ENCODE measurements at regions of chr18 and their contacts with region 1.

Region 1: GRCh38 chr18:11316546-11316945 is 167.2 kb upstream of the PIEZO2 start:
- DNase-seq: no peak
- H3K4me3 ChIP-seq: no peak overlapping the region
- H3K4me3 Mint-ChIP-seq: no peak overlapping the region
- H3K27ac Mint-ChIP-seq: no peak overlapping the region
- H3K4me1 ChIP-seq: peaks cover 10% of the 10 kb centered on the region; the same call in 1 of the 2 replicates
- H3K4me1 Mint-ChIP-seq: peaks cover 8% of the 10 kb centered on the region
- H3K27me3 ChIP-seq: no peaks in the 10 kb centered on the region
- H3K27me3 Mint-ChIP-seq: no peaks in the 10 kb centered on the region
- CTCF ChIP-seq: no peak

Region 2: DNA sequence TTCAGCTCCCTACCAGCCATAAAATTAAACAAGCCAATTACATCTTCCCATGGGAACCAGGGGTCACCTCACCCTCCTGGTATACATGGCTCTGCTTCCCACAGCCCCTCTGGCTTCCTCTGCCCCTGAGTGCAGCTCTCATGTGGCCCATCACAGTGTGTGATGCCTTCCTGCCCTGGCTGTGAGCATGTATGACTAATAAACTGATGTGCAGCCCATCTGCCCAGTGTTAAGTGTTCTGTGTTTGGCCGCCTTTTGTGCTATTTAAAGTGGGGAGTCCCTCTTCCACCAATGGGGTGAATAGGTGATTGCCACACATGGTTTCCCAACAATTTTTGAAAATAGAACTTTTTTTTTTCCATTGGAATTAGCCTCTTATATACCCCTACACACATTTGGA is 79.5 kb before region 1 on chr18:
- CTCF ChIA-PET with region 1: no interaction called
- POLR2A ChIA-PET with region 1: no interaction called
- intact Hi-C with region 1: loop called (anchors 2 kb)
- DNase-seq: no peak
- H3K4me3 ChIP-seq: no peak overlapping the region
- H3K4me3 Mint-ChIP-seq: no peak overlapping the region
- H3K27ac Mint-ChIP-seq: no peak overlapping the region
- H3K4me1 ChIP-seq: no peaks in the 10 kb centered on the region
- H3K4me1 Mint-ChIP-seq: no peaks in the 10 kb centered on the region
- H3K27me3 ChIP-seq: no peaks in the 10 kb centered on the region
- H3K27me3 Mint-ChIP-seq: peaks cover 3% of the 10 kb centered on the region
- CTCF ChIP-seq: no peak